ENCODE measurements at regions of chr1 and their contacts with region 1.

Region 1: GRCh38 chr1:11838349-11839272 is 9.0 kb downstream of the NPPA start:
- DNase-seq: peak; percentile 81 to 85 (median 82)
- ATAC-seq: peak; percentile 69 to 74 (median 70)
- H3K4me3 ChIP-seq: no peak overlapping the region
- H3K27ac ChIP-seq: peak overlapping the region in 2 of 3 donors; percentile 59 to 87
- H3K4me1 ChIP-seq: peaks cover 0 to 48% (median 25%) of the 10 kb centered on the region in 4 donors
- H3K27me3 ChIP-seq: no peaks in the 10 kb centered on the region
- CTCF ChIP-seq: peak; percentile 97 to 99 (median 98)
- POLR2A ChIP-seq: no peak

Region 2: DNA sequence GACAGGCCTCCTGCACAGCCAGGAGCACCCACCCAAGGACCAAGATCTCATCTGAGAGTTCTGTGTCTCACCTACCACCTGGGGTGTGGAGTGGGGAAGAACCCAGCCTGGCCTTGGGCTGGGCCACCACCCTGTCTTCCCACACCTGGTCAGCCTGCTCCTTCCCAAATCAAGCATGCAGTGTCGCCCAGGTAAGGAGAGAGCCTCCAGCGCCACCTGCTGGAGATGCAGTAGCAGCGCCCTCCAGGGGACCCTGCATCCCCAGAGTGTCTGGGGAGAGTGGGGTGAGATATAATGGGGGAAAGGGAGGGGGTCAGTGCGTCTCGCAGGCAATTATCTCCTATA is 55.3 kb after region 1 on chr1:
- intact Hi-C with region 1: loop called (anchors 2 kb)
- DNase-seq: peak; percentile 75 to 83 (median 82)
- ATAC-seq: peak; percentile 96 to 99 (median 97)
- H3K4me3 ChIP-seq: no peak overlapping the region
- H3K27ac ChIP-seq: peak overlapping the region in 1 of 3 donors; percentile 39
- H3K4me1 ChIP-seq: no peaks in the 10 kb centered on the region
- H3K27me3 ChIP-seq: peaks cover 0 to 5% of the 10 kb centered on the region in 2 donors
- CTCF ChIP-seq: peak; percentile 88 to 91 (median 90)
- POLR2A ChIP-seq: no peak

Region 3: GRCh38 chr1:11967028-11967547 is 128.5 kb after region 1 on chr1:
- intact Hi-C with region 1: loop called (anchors 5 to 10 kb)
- DNase-seq: peak in 1 of 3 donors; percentile 65
- ATAC-seq: peak; percentile 92 to 98 (median 96)
- H3K4me3 ChIP-seq: no peak overlapping the region
- H3K27ac ChIP-seq: no peak overlapping the region
- H3K4me1 ChIP-seq: no peaks in the 10 kb centered on the region
- H3K27me3 ChIP-seq: no peaks in the 10 kb centered on the region
- CTCF ChIP-seq: peak; percentile 70 to 78 (median 72)
- POLR2A ChIP-seq: no peak